K562 (cell line): ENCODE measurements at regions of chr3 and their contacts with region 1.

Region 1: DNA sequence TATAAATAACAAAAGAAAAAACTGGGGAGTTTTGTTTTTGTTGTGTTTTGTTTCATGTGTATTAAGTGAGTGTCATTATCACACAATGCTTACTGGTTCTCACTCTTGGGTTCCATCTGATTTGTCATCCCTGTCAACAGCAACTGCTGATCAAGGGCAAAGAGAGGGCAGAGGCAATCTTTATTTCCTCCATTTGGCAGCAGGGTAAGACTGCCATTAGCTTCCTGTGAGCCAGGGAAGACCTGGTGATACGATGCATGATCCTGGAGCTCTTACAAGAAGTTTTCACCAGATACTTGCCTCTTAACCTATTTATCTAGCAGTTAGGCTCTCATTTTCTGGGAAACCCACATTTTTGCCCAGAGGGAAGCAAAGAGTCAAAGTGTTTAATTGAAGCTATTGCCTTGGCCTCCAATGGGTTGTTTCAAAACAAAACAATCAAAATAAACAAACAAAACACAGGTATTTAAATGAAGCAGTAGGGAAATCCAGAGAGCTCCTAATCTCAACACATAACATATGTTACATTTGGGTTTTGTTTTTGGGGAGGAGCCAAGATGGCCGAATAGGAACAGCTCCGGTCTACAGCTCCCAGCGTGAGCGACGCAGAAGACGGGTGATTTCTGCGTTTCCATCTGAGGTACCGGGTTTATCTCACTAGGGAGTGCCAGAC is 529.8 kb downstream of the MAGI1 start:
- DNase-seq: peak in 1 of 4 experiments; percentile 54
- ATAC-seq: peak; percentile 73
- H3K4me3 ChIP-seq: peak overlapping the region; percentile 27
- H3K27ac ChIP-seq: peak overlapping the region; percentile 88
- H3K4me1 ChIP-seq: peaks cover 0 to 4% of the 10 kb centered on the region in 2 experiments; a peak in 2 of 5 replicates
- H3K27me3 ChIP-seq: no peaks in the 10 kb centered on the region
- CTCF ChIP-seq: no peak
- EP300 ChIP-seq: no peak
- POLR2A ChIP-seq: peak; percentile 63; the same call in 1 of the 2 replicates
- RAD21 ChIP-seq: no peak

Region 2: DNA sequence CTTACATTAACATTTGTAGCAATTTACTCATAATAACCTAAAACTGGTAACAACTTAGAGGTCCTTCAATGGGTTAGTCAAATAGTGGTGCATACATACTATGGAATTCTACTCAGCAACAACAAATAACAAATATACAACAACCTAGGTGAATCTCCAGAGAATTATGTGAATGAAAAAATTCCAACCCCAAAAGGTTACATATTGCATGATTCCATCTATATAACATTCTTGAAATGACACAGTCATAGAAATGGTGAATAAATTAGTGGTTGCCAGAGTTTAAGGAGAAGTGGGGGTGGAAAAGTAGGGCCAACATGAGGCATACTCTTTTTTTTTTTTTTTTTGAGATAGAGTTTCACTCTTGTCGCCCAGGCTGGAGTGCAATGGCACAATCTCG is 1869.1 kb before region 1 on chr3:
- CTCF ChIA-PET with region 1: no interaction called
- POLR2A ChIA-PET with region 1: no interaction called
- in situ Hi-C with region 1: no loop called
- intact Hi-C with region 1: no loop called
- DNase-seq: no peak
- ATAC-seq: no peak
- H3K4me3 ChIP-seq: no peak overlapping the region
- H3K27ac ChIP-seq: no peak overlapping the region
- H3K4me1 ChIP-seq: no peaks in the 10 kb centered on the region
- H3K27me3 ChIP-seq: no peaks in the 10 kb centered on the region
- CTCF ChIP-seq: no peak
- EP300 ChIP-seq: no peak
- POLR2A ChIP-seq: no peak
- RAD21 ChIP-seq: no peak

Region 3: DNA sequence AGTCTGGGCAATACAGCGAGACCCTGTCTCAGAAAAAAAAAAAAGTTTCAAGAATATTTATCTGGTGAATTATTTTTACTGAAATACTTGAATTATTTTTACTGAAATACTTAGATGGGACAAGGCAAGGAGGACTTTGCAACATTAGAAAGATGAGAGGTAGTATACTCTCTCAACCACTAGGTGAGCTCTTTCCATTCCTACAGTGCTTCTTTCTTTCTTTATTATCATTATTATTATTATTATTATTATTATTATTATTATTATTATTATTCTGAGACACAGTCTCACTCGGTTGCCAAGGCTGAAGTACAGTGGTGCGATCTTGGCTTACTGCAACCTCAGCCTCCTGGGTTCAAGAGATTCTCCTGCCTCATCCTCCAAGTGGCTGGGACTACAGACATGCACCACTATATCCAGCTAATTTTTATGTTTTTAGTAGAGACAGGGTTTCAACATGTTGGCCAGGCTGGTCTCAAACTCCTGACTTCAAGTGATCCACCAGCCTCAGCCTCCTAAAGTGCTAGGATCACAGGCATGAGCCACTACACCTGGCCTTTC is 61.0 kb after region 1 on chr3:
- CTCF ChIA-PET with region 1: no interaction called
- POLR2A ChIA-PET with region 1: no interaction called
- in situ Hi-C with region 1: no loop called
- intact Hi-C with region 1: loop called (anchors 10 kb)
- DNase-seq: peak in 1 of 4 experiments; percentile 15
- ATAC-seq: 0 out of 3 replicates have a peak, but pooled peaks have one; percentile 32
- H3K4me3 ChIP-seq: no peak overlapping the region
- H3K27ac ChIP-seq: no peak overlapping the region
- H3K4me1 ChIP-seq: peaks cover 0 to 24% of the 10 kb centered on the region in 2 experiments; a peak in 3 of 5 replicates
- H3K27me3 ChIP-seq: no peaks in the 10 kb centered on the region
- CTCF ChIP-seq: peak in 2 of 3 experiments; percentile 24 to 30; a peak in 2 of 6 replicates
- EP300 ChIP-seq: no peak
- POLR2A ChIP-seq: no peak
- RAD21 ChIP-seq: 0 out of 4 replicates have a peak, but pooled peaks of 1 of the 2 experiments have one; percentile 7